OCI-LY7 (cell line): ENCODE measurements at regions of chr6 and their contacts with region 1.

Region 1: DNA sequence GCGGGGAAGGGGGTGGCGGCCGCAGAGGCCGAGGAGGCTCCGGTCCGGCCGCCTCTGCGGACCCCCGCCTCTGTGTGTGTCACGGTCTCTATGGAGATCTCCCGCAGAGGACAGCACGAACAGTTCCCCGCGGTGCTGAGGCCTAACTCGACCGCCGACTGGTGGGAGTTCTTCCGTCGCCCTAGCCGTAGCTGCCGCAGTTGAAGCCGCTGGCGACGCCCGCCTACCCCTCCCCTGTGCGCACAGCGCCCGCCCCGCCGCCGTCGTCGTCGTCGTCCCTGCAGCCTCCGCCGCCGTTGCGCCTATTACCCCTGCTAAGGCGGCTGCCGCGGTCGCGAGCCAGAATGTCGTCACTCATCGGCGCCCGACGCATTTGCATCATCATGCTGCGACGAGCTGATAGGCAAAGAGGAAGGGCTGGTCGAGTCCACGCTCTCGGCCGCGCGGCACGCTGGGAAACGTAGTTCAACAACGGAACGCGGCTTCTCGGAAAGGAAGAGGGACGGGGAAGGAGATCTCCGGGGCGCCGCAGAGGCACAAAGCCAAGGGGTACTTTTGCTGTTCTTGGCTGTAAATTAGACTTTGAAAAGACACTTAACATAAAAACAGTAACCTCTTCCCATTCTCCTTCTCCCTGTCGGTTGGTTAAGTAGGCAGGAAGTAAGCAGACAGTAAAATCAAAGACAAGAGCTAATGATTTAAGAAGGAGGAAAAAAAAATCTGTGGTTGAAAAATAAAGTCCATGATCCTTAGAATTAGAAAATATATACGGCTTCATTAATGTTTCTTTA is at the start of gene NUP153:
- DNase-seq: peak; percentile 98
- H3K4me3 ChIP-seq: peak within 1 kb of the TSS; percentile 100
- H3K27ac ChIP-seq: peak within 1 kb of the TSS; percentile 95
- H3K4me1 ChIP-seq: peaks cover 28% of the 10 kb centered on the region
- CTCF ChIP-seq: no peak
- total RNA-seq, gene NUP153: 66.3 and 72.5 TPM in 2 replicates

Region 2: GRCh38 chr6:17725083-17725482 is 18.3 kb after region 1 on chr6:
- CTCF ChIA-PET with region 1: no interaction called
- POLR2A ChIA-PET with region 1: no interaction called
- intact Hi-C with region 1: no loop called
- DNase-seq: no peak
- H3K4me3 ChIP-seq: no peak overlapping the region
- H3K27ac ChIP-seq: no peak overlapping the region
- H3K4me1 ChIP-seq: no peaks in the 10 kb centered on the region
- CTCF ChIP-seq: no peak

Region 3: GRCh38 chr6:18034798-18035202 is 328.0 kb after region 1 on chr6:
- CTCF ChIA-PET with region 1: no interaction called
- POLR2A ChIA-PET with region 1: no interaction called
- intact Hi-C with region 1: no loop called
- DNase-seq: no peak
- H3K4me3 ChIP-seq: no peak overlapping the region
- H3K27ac ChIP-seq: no peak overlapping the region
- H3K4me1 ChIP-seq: no peaks in the 10 kb centered on the region
- CTCF ChIP-seq: no peak

Region 4: DNA sequence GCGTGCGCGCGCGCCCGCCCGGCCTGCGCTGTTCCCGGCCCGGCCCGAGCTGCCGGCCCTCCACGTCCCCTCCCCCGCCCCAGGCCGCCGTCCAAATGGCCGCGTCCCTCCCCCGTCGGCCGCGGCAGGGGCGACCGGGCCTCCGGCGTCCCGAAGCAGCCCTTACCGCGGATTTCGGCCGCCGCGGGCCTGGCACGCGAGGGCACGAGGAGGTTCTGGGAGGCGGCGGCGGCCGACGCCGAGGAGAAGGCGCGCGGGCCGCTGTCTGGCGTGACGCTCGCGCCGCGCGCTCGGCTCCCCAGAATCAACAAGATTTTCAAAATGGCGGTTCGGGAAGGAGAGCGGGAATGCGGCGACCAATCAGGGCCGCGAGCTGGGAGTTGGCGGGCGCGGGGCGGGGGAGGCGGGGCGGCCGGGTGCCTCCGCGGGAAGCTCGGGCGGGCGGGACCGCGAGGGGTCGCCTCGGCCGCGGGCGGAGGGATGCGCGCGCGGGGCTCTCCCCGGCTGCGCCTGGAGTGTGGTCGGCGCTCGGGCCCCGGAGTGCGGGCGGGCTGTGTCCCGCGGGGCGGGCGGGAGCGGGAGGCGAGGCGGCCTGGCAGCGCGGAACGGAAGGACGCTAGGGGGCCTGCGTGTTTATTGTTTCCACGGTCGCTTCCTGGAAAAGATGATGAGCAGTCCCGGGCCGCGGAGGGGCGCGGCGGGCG is 557.6 kb after region 1 on chr6 and contains the start of gene DEK:
- CTCF ChIA-PET with region 1: no interaction called
- POLR2A ChIA-PET with region 1: interaction called, 3 read pairs
- intact Hi-C with region 1: loop called (anchors 1 kb)
- DNase-seq: peak; percentile 86
- H3K4me3 ChIP-seq: peak within 1 kb of the TSS; percentile 90
- H3K27ac ChIP-seq: peak within 1 kb of the TSS; percentile 91
- H3K4me1 ChIP-seq: peaks cover 44% of the 10 kb centered on the region
- CTCF ChIP-seq: peak; percentile 73
- total RNA-seq, gene DEK: 235 and 462 TPM in 2 replicates